HCT116 (cell line): ENCODE measurements at regions of chr12 and their contacts with region 1.

Region 1: GRCh38 chr12:52372216-52373154 is 5.2 kb upstream of the KRT85 start:
- DNase-seq: peak; percentile 79
- ATAC-seq: peak; percentile 96
- H3K4me3 ChIP-seq: no peak overlapping the region
- H3K27ac ChIP-seq: no peak overlapping the region
- H3K4me1 ChIP-seq: peaks cover 0 to 2% of the 10 kb centered on the region in 2 experiments; a peak in 1 of 4 replicates
- H3K27me3 ChIP-seq: no peaks in the 10 kb centered on the region
- CTCF ChIP-seq: peak; percentile 82 to 97 (median 84)
- POLR2A ChIP-seq: no peak
- RAD21 ChIP-seq: peak; percentile 96

Region 2: DNA sequence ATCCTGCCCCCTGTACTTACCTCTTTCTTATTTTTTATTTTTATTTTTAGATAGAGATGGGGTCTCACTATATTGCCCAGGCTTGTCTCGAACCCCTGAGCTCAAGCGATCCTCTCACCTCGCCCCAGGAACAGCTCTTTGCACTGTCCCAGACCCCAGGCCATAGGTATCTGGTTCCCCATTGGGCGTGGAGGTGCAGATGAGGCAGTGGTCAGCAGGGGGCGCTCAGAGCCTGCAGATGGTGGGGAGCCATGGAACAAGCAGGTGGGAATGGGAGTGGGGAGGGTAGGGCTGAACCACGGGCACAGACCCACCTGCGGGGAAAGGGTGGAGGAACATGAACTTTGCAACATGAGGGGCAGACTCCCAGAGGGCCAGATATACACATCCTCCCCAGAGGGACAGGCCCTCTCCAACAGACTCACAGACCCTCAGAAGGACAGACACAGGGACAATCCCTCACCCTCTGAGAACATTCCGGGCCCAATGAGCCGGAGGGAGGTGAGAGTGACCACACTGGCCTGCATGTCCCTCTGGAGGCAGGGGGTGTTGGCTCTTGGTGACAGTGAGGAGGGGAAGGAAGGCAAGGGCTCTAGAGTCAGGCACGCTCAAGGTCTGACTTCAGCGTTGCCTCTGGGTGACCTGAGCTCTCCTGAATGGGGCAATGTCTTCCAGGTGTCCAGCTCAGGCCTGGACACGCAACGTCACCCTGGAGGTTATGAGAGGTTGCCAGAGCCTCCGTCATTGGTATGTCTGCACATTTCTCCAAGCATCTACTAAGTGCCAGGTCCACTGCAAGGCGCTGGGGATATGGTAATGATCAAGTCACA is 215.5 kb before region 1 on chr12:
- CTCF ChIA-PET with region 1: interaction called, 14 read pairs
- POLR2A ChIA-PET with region 1: no interaction called
- RAD21 ChIA-PET with region 1: interaction called, 3 to 5 read pairs
- intact Hi-C with region 1: loop called (anchors 1 kb)
- DNase-seq: no peak
- ATAC-seq: peak; percentile 67
- H3K4me3 ChIP-seq: no peak overlapping the region
- H3K27ac ChIP-seq: no peak overlapping the region
- H3K4me1 ChIP-seq: peaks cover 27 to 64% of the 10 kb centered on the region in 2 experiments
- H3K27me3 ChIP-seq: no peaks in the 10 kb centered on the region
- CTCF ChIP-seq: peak in 2 of 3 experiments; percentile 95 to 98; a peak in 4 of 6 replicates
- POLR2A ChIP-seq: no peak
- RAD21 ChIP-seq: no peak

Region 3: DNA sequence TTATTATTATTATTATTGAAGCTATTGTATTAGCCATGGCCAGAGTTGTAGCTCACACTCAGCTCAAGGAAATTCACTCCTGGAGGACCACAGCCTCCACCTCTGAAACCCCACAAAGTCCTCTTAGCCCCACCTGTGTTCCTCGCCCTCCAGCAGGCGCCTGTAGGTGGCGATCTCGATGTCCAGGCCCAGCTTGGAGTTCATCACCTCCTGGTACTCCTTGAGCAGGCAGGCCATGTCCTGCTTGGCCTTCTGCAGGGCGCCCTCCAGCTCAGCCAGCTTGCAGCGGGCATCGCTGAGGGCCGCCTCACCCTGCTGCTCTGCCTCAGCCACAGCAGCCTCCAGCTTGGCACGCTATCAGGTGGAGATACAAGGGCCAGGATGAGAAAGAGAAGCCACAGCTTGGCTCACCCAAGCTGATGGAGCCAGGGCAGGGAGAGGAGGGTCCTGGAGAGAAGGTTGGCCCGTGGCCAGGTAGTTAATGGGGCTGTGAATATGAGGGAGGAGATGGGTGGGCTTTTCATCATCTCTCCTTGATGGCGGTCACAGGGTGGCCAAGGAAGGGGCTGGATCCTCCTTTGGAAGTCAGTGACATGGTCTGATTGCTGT is 10.3 kb before region 1 on chr12:
- CTCF ChIA-PET with region 1: interaction called, 21 read pairs
- POLR2A ChIA-PET with region 1: no interaction called
- RAD21 ChIA-PET with region 1: no interaction called
- intact Hi-C with region 1: no loop called
- DNase-seq: no peak
- ATAC-seq: peak; percentile 79
- H3K4me3 ChIP-seq: no peak overlapping the region
- H3K27ac ChIP-seq: no peak overlapping the region
- H3K4me1 ChIP-seq: no peaks in the 10 kb centered on the region; a peak in 1 of 4 replicates
- H3K27me3 ChIP-seq: no peaks in the 10 kb centered on the region
- CTCF ChIP-seq: peak; percentile 37 to 63 (median 62); a peak in 5 of 6 replicates
- POLR2A ChIP-seq: no peak
- RAD21 ChIP-seq: no peak; the same call in 1 of the 2 replicates

Region 4: GRCh38 chr12:52870351-52871290 is 498.1 kb after region 1 on chr12:
- CTCF ChIA-PET with region 1: interaction called, 33 read pairs
- POLR2A ChIA-PET with region 1: interaction called, 3 read pairs
- RAD21 ChIA-PET with region 1: interaction called, 3 to 6 read pairs
- intact Hi-C with region 1: no loop called
- DNase-seq: no peak
- ATAC-seq: peak; percentile 71
- H3K4me3 ChIP-seq: 0 out of 4 replicates have a peak overlapping the region, but pooled peaks of 1 of the 2 experiments have one; percentile 16
- H3K27ac ChIP-seq: peak overlapping the region; percentile 81
- H3K4me1 ChIP-seq: peaks cover 48 to 64% of the 10 kb centered on the region in 2 experiments
- H3K27me3 ChIP-seq: no peaks in the 10 kb centered on the region
- CTCF ChIP-seq: peak in 2 of 3 experiments; percentile 89 to 96; a peak in 4 of 6 replicates
- POLR2A ChIP-seq: no peak
- RAD21 ChIP-seq: no peak

Region 5: GRCh38 chr12:52884526-52885293 is 512.2 kb after region 1 on chr12:
- CTCF ChIA-PET with region 1: interaction called, 57 read pairs
- POLR2A ChIA-PET with region 1: no interaction called
- RAD21 ChIA-PET with region 1: interaction called, 7 to 14 read pairs
- intact Hi-C with region 1: loop called (anchors 1 kb)
- DNase-seq: no peak
- ATAC-seq: peak; percentile 85
- H3K4me3 ChIP-seq: no peak overlapping the region
- H3K27ac ChIP-seq: no peak overlapping the region
- H3K4me1 ChIP-seq: peaks cover 16 to 35% of the 10 kb centered on the region in 2 experiments; a peak in 3 of 4 replicates
- H3K27me3 ChIP-seq: no peaks in the 10 kb centered on the region
- CTCF ChIP-seq: peak; percentile 87 to 99 (median 97)
- POLR2A ChIP-seq: no peak
- RAD21 ChIP-seq: peak; percentile 100